ENCODE measurements at regions of chr5 and their contacts with region 1.

Region 1: GRCh38 chr5:41856644-41857491 is 13.4 kb downstream of the OXCT1 start:
- DNase-seq: peak; percentile 59
- ATAC-seq: peak; percentile 67
- H3K4me3 Mint-ChIP-seq: no peak overlapping the region
- H3K27ac Mint-ChIP-seq: no peak overlapping the region
- H3K4me1 Mint-ChIP-seq: peaks cover 44% of the 10 kb centered on the region
- H3K27me3 Mint-ChIP-seq: no peaks in the 10 kb centered on the region

Region 2: GRCh38 chr5:41219658-41220269 is 637.1 kb before region 1 on chr5:
- CTCF ChIA-PET with region 1: no interaction called
- POLR2A ChIA-PET with region 1: no interaction called
- intact Hi-C with region 1: no loop called
- DNase-seq: no peak
- ATAC-seq: no peak
- H3K4me3 Mint-ChIP-seq: no peak overlapping the region
- H3K27ac Mint-ChIP-seq: no peak overlapping the region
- H3K4me1 Mint-ChIP-seq: no peaks in the 10 kb centered on the region
- H3K27me3 Mint-ChIP-seq: peaks cover 2% of the 10 kb centered on the region

Region 3: GRCh38 chr5:41869739-41870626 is 13.1 kb after region 1 on chr5 and contains the start of gene OXCT1:
- CTCF ChIA-PET with region 1: interaction called, 35 read pairs
- POLR2A ChIA-PET with region 1: interaction called, 4 read pairs
- intact Hi-C with region 1: loop called in 1 of 2 experiments (anchors 1 kb)
- DNase-seq: peak; percentile 96
- ATAC-seq: peak; percentile 92
- H3K4me3 Mint-ChIP-seq: peak within 1 kb of the TSS; percentile 91
- H3K27ac Mint-ChIP-seq: peak within 1 kb of the TSS; percentile 94
- H3K4me1 Mint-ChIP-seq: peaks cover 54% of the 10 kb centered on the region
- H3K27me3 Mint-ChIP-seq: no peaks in the 10 kb centered on the region
- total RNA-seq, gene OXCT1: 70.3 to 91.4 TPM

Region 4: DNA sequence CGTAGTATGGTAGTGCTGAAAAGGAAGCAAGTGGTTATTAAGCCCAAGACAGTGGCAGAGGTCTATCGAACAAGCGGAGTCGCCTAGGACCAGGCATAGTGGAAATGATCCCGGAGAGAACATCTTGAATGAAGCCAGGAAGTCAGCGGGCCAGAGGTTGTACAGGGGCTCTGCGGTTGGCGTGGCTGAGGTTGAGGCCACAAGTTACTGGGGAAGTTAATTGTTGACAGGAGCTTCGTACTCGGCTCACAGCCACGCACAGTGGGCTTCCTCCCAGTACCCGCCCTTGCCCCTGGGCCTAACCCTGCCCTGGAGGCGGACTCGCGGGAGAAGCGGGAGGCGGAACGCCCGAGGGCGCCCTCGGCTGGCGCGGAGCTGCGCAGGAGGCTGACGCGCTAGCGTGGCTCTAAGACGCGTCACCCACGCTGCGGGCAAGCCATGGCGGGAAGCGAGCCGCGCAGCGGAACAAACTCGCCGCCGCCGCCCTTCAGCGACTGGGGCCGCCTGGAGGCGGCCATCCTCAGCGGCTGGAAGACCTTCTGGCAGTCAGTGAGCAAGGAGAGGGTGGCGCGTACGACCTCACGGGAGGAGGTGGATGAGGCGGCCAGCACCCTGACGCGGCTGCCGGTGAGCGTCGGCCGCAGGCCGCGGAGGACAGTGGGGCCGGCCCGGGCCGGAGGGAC is 68.1 kb after region 1 on chr5 and contains the start of gene FBXO4:
- CTCF ChIA-PET with region 1: interaction called, 7 read pairs
- POLR2A ChIA-PET with region 1: interaction called, 3 read pairs
- intact Hi-C with region 1: loop called (anchors 1 kb)
- DNase-seq: peak; percentile 94
- ATAC-seq: peak; percentile 98
- H3K4me3 Mint-ChIP-seq: peak within 1 kb of the TSS; percentile 85
- H3K27ac Mint-ChIP-seq: peak within 1 kb of the TSS; percentile 99
- H3K4me1 Mint-ChIP-seq: peaks cover 24% of the 10 kb centered on the region
- H3K27me3 Mint-ChIP-seq: no peaks in the 10 kb centered on the region
- total RNA-seq, gene FBXO4: 18.8 to 22.3 TPM

Region 5: GRCh38 chr5:42021119-42021518 is 164.3 kb after region 1 on chr5:
- CTCF ChIA-PET with region 1: no interaction called
- POLR2A ChIA-PET with region 1: no interaction called
- intact Hi-C with region 1: no loop called
- DNase-seq: no peak
- ATAC-seq: no peak
- H3K4me3 Mint-ChIP-seq: no peak overlapping the region
- H3K27ac Mint-ChIP-seq: no peak overlapping the region
- H3K4me1 Mint-ChIP-seq: no peaks in the 10 kb centered on the region
- H3K27me3 Mint-ChIP-seq: peaks cover 13% of the 10 kb centered on the region

Region 6: GRCh38 chr5:42035526-42035925 is 178.7 kb after region 1 on chr5:
- CTCF ChIA-PET with region 1: no interaction called
- POLR2A ChIA-PET with region 1: no interaction called
- intact Hi-C with region 1: no loop called
- DNase-seq: no peak
- ATAC-seq: no peak
- H3K4me3 Mint-ChIP-seq: no peak overlapping the region
- H3K27ac Mint-ChIP-seq: no peak overlapping the region
- H3K4me1 Mint-ChIP-seq: no peaks in the 10 kb centered on the region
- H3K27me3 Mint-ChIP-seq: peaks cover 14% of the 10 kb centered on the region

Region 7: DNA sequence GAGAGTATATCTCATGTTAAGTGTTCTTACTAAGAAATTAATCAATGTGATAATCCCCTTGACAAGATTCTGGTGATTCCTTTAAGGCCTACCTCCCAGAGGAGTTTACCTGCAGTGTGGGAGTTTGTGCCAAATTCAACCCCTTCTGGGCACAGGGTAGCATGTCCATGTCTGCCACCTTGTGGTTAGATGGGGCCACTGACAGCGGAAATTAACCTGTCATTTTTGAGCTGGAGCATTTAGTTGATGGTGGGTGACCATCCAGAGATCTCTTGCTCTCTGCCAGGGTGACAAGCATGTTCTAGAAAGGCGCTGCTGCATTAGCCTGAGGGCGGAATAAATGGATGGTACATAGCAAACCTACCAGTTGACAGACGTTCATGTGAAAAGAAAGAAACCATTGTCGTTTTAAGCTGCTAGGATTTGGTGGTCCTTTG is 200.4 kb after region 1 on chr5:
- CTCF ChIA-PET with region 1: interaction called, 142 read pairs
- POLR2A ChIA-PET with region 1: no interaction called
- intact Hi-C with region 1: loop called (anchors 1 kb)
- DNase-seq: peak; percentile 69
- ATAC-seq: peak; percentile 75
- H3K4me3 Mint-ChIP-seq: no peak overlapping the region
- H3K27ac Mint-ChIP-seq: no peak overlapping the region
- H3K4me1 Mint-ChIP-seq: no peaks in the 10 kb centered on the region
- H3K27me3 Mint-ChIP-seq: peaks cover 2% of the 10 kb centered on the region

Region 8: GRCh38 chr5:42767491-42768105 is 910.7 kb after region 1 on chr5:
- CTCF ChIA-PET with region 1: interaction called, 5 read pairs
- POLR2A ChIA-PET with region 1: no interaction called
- intact Hi-C with region 1: loop called in 1 of 2 experiments (anchors 10 kb)
- DNase-seq: no peak
- ATAC-seq: no peak
- H3K4me3 Mint-ChIP-seq: no peak overlapping the region
- H3K27ac Mint-ChIP-seq: no peak overlapping the region
- H3K4me1 Mint-ChIP-seq: no peaks in the 10 kb centered on the region
- H3K27me3 Mint-ChIP-seq: peaks cover 3% of the 10 kb centered on the region